ENCODE measurements at regions of chr7 and their contacts with region 1.

Region 1: DNA sequence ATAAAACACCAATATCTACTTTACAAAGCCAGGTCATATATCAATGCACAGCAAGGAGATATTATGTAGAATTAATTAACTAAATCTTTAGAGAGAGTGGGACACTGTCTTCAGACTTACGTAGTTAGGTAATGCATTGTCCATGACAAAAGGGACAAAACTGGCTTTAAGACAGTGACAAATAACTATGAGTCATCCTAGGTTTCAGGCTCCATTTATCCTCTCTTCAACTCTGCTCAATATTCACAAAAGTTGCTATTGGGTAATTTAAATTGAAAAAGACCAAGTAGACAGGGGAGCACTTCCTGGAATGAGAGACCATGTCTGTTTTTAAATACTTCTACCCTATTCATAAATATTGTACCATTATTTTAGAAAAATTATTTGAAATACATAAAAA is 464.5 kb downstream of the ARL4A start:
- DNase-seq: no peak
- H3K4me3 ChIP-seq: no peak overlapping the region
- H3K27ac ChIP-seq: no peak overlapping the region
- H3K27me3 ChIP-seq: no peaks in the 10 kb centered on the region
- CTCF ChIP-seq: no peak

Region 2: GRCh38 chr7:13017333-13017853 is 134.6 kb before region 1 on chr7:
- CTCF ChIA-PET with region 1: interaction called, 10 read pairs
- POLR2A ChIA-PET with region 1: no interaction called
- DNase-seq: peak; percentile 44
- H3K4me3 ChIP-seq: peak overlapping the region; percentile 36
- H3K27ac ChIP-seq: peak overlapping the region; percentile 53
- H3K27me3 ChIP-seq: no peaks in the 10 kb centered on the region
- CTCF ChIP-seq: no peak

Region 3: DNA sequence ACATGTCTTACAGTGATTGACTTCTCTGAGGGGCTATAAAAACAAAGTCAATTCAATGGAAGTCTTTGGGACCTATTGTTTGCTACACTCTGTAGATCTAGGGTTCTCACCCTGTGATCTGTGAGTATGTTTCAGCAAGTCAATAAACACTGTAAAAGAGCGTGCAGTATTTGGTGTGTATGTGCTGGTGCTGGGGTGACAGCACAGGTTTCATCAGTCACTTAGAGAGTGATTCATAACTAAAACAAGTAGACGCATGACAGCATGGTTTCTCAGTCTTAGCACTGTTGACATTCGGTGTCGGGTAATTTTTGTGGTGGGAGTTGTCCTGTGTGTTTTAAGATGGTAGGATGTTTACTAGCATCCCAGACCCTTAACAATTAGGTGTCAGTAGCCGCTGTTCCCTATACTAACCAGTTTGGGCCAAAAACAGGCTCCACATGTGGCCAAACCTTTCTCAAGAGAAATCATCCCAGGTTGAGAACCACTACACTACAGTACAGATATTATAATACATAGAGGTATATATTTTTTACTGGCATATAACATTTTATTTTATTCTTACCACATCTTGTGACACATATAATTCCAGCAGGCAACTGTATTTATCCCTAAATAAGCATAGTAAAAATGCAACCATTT is 52.7 kb before region 1 on chr7:
- CTCF ChIA-PET with region 1: no interaction called
- POLR2A ChIA-PET with region 1: interaction called, 13 read pairs
- DNase-seq: no peak
- H3K4me3 ChIP-seq: no peak overlapping the region
- H3K27ac ChIP-seq: no peak overlapping the region
- H3K27me3 ChIP-seq: no peaks in the 10 kb centered on the region
- CTCF ChIP-seq: no peak

Region 4: GRCh38 chr7:13139436-13139835 is 12.5 kb before region 1 on chr7:
- CTCF ChIA-PET with region 1: no interaction called
- POLR2A ChIA-PET with region 1: no interaction called
- DNase-seq: no peak
- H3K4me3 ChIP-seq: no peak overlapping the region
- H3K27ac ChIP-seq: no peak overlapping the region
- H3K27me3 ChIP-seq: no peaks in the 10 kb centered on the region
- CTCF ChIP-seq: no peak

Region 5: DNA sequence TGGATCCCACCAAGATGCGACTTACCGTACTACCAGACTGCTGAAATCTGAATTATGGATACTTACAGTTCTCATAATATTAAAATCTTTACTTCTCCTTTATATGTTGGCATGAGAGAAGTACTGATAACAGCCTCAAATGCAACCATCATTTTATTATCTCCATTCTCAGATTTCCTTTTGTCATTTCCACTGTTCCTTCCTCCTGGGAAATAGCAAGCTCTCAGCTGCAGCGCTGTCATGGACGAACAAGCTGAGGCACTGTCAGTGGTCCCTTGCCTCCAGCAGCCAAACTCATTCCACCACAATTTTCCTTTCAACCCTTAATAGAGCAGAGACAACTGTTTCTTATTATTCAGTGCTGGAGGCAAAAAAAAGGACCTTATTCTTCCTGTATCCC is 13.9 kb after region 1 on chr7:
- CTCF ChIA-PET with region 1: no interaction called
- POLR2A ChIA-PET with region 1: no interaction called
- DNase-seq: no peak
- H3K4me3 ChIP-seq: no peak overlapping the region
- H3K27ac ChIP-seq: no peak overlapping the region
- H3K27me3 ChIP-seq: no peaks in the 10 kb centered on the region
- CTCF ChIP-seq: no peak

Measured in AG04450 (cell line).